ENCODE measurements at regions of chr6 and their contacts with region 1.

Region 1: GRCh38 chr6:27078734-27079357 is 168.7 kb upstream of the PRSS16 start:
- DNase-seq: peak in 4 of 6 donors; percentile 17 to 53 (median 31)
- ATAC-seq: peak; percentile 79 to 96 (median 94)
- H3K4me3 ChIP-seq: peak overlapping the region in 1 of 4 donors; percentile 38
- H3K27ac ChIP-seq: no peak overlapping the region
- H3K4me1 ChIP-seq: peaks cover 0 to 6% (median 0%) of the 10 kb centered on the region in 3 donors
- H3K27me3 ChIP-seq: peaks cover 0 to 17% (median 0%) of the 10 kb centered on the region in 4 donors
- CTCF ChIP-seq: peak; percentile 20 to 54 (median 46)

Region 2: GRCh38 chr6:26607434-26608230 is 471.2 kb before region 1 on chr6:
- intact Hi-C with region 1: loop called (anchors 5 to 10 kb)
- DNase-seq: peak in 3 of 6 donors; percentile 24 to 40 (median 38)
- ATAC-seq: peak; percentile 74 to 96 (median 91)
- H3K4me3 ChIP-seq: no peak overlapping the region
- H3K27ac ChIP-seq: no peak overlapping the region
- H3K4me1 ChIP-seq: no peaks in the 10 kb centered on the region
- H3K27me3 ChIP-seq: no peaks in the 10 kb centered on the region
- CTCF ChIP-seq: peak in 3 of 4 donors; percentile 48 to 55 (median 51)

Region 3: GRCh38 chr6:26613689-26614683 is 464.9 kb before region 1 on chr6:
- intact Hi-C with region 1: loop called (anchors 5 to 10 kb)
- DNase-seq: peak in 2 of 6 donors; percentile 57 to 64
- ATAC-seq: peak in 3 of 4 donors; percentile 32 to 70 (median 41)
- H3K4me3 ChIP-seq: peak overlapping the region in 1 of 4 donors; percentile 39
- H3K27ac ChIP-seq: no peak overlapping the region
- H3K4me1 ChIP-seq: no peaks in the 10 kb centered on the region
- H3K27me3 ChIP-seq: peaks cover 0 to 11% (median 2%) of the 10 kb centered on the region in 4 donors
- CTCF ChIP-seq: no peak

Region 4: GRCh38 chr6:27049863-27050781 is 28.7 kb before region 1 on chr6:
- intact Hi-C with region 1: no loop called
- DNase-seq: no peak
- ATAC-seq: no peak
- H3K4me3 ChIP-seq: no peak overlapping the region
- H3K27ac ChIP-seq: no peak overlapping the region
- H3K4me1 ChIP-seq: no peaks in the 10 kb centered on the region
- H3K27me3 ChIP-seq: no peaks in the 10 kb centered on the region
- CTCF ChIP-seq: no peak

Region 5: DNA sequence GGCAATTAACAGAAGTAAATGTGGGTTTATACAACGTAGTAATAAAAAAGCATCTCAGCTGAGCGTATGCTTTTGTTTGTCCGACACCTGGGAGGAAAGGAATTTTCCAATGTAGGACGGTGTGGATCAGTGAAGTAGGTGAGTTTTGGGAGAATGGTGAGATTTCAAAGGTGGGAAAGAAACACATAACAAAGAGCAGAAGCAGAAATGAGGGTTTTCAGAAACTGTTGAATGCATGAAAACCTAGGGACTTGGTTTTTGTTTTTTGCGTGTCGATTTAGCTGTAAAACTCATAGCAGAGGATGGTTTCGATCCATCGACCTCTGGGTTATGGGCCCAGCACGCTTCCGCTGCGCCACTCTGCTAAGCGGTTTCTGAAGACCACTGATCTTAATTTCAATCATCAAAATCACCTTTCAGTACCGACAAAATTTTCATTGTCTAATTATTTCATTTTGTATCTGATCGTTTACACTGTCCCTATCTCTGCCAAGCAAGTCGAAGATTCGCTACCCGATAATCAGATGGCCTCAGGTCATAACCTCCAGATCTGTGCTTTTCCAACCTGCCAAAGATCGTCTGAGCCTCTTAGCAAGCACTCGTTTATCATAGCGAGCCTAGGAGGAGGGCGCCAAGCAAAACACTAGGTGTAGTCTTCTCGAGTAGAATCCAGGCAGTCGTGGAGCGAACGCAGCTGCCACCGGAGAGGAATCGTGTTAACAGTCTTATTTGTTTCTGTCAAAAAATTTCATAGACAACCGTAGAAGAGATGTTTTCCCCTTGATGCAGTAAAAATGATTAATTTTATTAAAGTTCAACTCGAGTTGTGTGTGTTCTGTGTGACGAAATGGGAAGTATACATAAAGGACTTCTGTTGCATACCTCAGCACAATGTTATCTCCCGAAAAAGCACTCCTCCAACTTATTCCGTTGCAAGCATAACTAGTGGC is 254.1 kb after region 1 on chr6:
- intact Hi-C with region 1: no loop called
- DNase-seq: peak in 1 of 6 donors; percentile 17
- ATAC-seq: peak in 2 of 4 donors; percentile 55 to 61
- H3K4me3 ChIP-seq: peak overlapping the region in 1 of 4 donors; percentile 20
- H3K27ac ChIP-seq: no peak overlapping the region
- H3K4me1 ChIP-seq: no peaks in the 10 kb centered on the region
- H3K27me3 ChIP-seq: peaks cover 4 to 10% (median 6%) of the 10 kb centered on the region in 4 donors
- CTCF ChIP-seq: no peak

Region 6: GRCh38 chr6:27422651-27423332 is 343.9 kb after region 1 on chr6:
- intact Hi-C with region 1: no loop called
- DNase-seq: no peak
- ATAC-seq: no peak
- H3K4me3 ChIP-seq: no peak overlapping the region
- H3K27ac ChIP-seq: no peak overlapping the region
- H3K4me1 ChIP-seq: no peaks in the 10 kb centered on the region
- H3K27me3 ChIP-seq: peaks cover 0 to 2% (median 0%) of the 10 kb centered on the region in 4 donors
- CTCF ChIP-seq: no peak

Measured in pancreas (tissue), 10 donors.